IMR-90 (cell line): ENCODE measurements at regions of chr5 and their contacts with region 1.

Region 1: DNA sequence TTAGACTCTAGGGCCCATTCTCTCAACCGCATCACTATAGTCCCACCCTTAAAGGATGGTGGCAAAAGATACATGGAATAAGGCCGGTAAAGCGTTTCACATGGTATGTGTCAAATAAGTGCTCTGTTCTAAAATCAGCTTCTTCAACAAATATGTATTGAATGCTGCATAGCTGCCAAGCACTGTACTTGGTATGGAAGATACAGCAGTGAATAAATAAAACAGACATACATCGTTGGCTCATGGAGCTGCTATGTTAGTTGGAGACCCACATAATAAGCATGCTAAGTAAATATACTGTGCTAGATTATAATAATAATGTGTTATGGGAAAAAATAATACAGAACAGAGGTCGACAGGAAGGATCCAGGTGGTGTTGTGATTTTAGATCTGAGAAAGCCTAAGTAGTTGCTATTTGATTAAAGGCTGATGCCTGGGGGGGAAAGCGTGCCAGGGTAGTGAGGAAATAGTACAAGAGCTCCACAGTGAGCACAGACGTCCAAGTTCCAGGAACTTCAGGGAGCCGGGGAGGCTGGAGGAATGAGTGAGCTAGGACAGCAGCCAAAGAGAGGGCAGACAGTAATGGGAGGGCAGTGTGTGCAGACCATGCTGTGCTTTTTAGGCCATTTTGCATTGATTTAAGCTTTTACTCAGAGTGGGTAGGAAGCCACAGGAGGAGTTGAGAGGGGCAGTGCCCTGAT is 93.7 kb downstream of the JAKMIP2 start:
- DNase-seq: no peak
- ATAC-seq: peak; percentile 56
- H3K4me3 ChIP-seq: no peak overlapping the region
- H3K27ac ChIP-seq: no peak overlapping the region
- H3K4me1 ChIP-seq: no peaks in the 10 kb centered on the region
- H3K27me3 ChIP-seq: no peaks in the 10 kb centered on the region
- CTCF ChIP-seq: no peak
- POLR2A ChIP-seq: no peak
- RAD21 ChIP-seq: no peak

Region 2: GRCh38 chr5:147869112-147869511 is 180.3 kb after region 1 on chr5:
- CTCF ChIA-PET with region 1: no interaction called
- POLR2A ChIA-PET with region 1: interaction called, 12 read pairs
- dilution Hi-C with region 1: no loop called
- in situ Hi-C with region 1: no loop called
- intact Hi-C with region 1: no loop called
- DNase-seq: no peak
- ATAC-seq: no peak
- H3K4me3 ChIP-seq: no peak overlapping the region
- H3K27ac ChIP-seq: no peak overlapping the region
- H3K4me1 ChIP-seq: no peaks in the 10 kb centered on the region
- H3K27me3 ChIP-seq: no peaks in the 10 kb centered on the region
- CTCF ChIP-seq: no peak
- POLR2A ChIP-seq: no peak
- RAD21 ChIP-seq: no peak